Dorsolateral prefrontal cortex (tissue), 120 donors: ENCODE measurements at regions of chr5 and their contacts with region 1.

Region 1: DNA sequence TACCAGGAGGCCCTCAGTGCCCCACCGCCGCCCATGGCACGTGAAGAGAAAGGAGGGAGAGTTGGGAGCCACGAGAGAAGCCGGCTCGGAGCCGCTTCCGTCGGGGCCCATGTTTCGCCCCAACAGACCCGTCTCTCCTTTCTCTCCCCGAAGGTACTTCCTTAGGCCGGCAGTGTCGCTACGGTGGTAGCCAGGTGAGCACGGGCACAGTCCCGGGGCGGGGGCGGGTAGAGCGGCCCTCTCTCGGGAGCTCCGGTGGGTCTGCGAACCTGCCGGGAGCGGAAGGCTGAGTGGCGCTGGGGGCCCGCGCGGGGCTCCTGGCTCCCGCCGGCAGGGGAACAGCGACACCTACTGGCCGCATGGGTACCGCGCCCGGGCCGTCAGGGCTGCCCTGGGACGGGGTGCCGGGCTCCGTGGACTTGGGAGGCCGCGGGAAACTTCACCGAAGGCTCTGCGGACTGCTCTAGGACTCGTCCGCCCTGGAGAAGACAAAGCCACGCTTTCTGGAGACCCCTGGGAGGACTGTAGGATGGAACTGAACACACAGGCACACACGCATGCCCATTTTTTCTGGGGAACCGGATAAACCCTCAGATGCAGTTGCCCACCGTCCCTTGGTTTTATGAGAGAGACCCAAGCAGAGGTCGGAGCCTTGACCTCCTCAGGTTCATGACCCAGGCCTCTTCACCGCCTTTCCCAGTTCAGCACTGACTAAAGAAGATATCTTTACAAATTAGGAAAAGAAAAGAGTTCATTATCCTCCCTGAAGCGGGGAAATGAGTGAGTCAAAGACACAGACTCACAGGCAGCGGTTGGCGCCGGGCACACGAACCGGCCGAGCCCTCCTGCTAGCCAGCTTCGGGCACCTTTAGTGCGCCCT is 202.5 kb downstream of the MEF2C start:
- DNase-seq: peak; percentile 68 to 92 (median 84)
- H3K4me3 ChIP-seq: peak overlapping the region; percentile 53 to 93 (median 80)
- H3K27ac ChIP-seq: peak overlapping the region; percentile 91 to 100 (median 99)
- H3K27me3 ChIP-seq: peaks cover 0 to 27% (median 0%) of the 10 kb centered on the region in 45 donors
- CTCF ChIP-seq: peak in 55 of 56 donors; percentile 77 to 100 (median 96)

Region 2: GRCh38 chr5:87412630-87413342 is 1267.7 kb before region 1 on chr5 and contains the start of gene CCNH:
- intact Hi-C with region 1: loop called in 1 of 2 experiments (anchors 10 kb)
- DNase-seq: peak; percentile 95 to 100 (median 99)
- H3K4me3 ChIP-seq: peak within 1 kb of the TSS; percentile 62 to 99 (median 89)
- H3K27ac ChIP-seq: peak within 1 kb of the TSS; percentile 73 to 100 (median 97)
- H3K27me3 ChIP-seq: no peaks in the 10 kb centered on the region
- CTCF ChIP-seq: peak in 22 of 56 donors; percentile 6 to 54 (median 28)
- total RNA-seq, gene CCNH: 69.5 to 140 (median 104) TPM

Region 3: DNA sequence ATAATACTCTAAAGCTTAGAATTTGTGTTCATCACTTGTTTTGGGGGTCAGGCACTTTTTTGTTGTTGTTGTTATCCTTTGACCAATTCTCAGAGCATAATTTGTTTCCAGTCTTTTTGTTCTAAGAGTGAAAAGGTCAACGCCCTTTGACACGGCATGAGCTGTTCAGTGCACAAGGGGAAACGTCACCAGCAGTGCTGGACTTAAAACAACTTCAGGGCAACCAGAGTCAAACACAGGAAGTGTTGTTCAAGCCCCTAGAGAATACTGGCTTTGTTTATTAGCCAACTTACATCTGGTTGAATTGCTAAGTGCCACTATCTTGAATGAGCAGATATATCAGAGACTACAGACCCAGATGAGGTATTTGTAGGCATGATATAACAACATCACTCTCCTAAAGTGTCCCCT is 780.8 kb before region 1 on chr5:
- intact Hi-C with region 1: loop called in 1 of 2 experiments (anchors 5 kb)
- DNase-seq: peak in 8 of 10 donors; percentile 41 to 87 (median 66)
- H3K4me3 ChIP-seq: peak overlapping the region in 16 of 59 donors; percentile 2 to 38 (median 18)
- H3K27ac ChIP-seq: peak overlapping the region; percentile 59 to 94 (median 89)
- H3K27me3 ChIP-seq: no peaks in the 10 kb centered on the region
- CTCF ChIP-seq: peak in 4 of 56 donors; percentile 6 to 24 (median 12)

Region 4: GRCh38 chr5:88190139-88190834 is 490.2 kb before region 1 on chr5:
- intact Hi-C with region 1: loop called in 1 of 2 experiments (anchors 5 kb)
- DNase-seq: peak in 5 of 10 donors; percentile 14 to 43 (median 32)
- H3K4me3 ChIP-seq: peak overlapping the region in 55 of 59 donors; percentile 5 to 58 (median 38)
- H3K27ac ChIP-seq: peak overlapping the region in 26 of 59 donors; percentile 5 to 77 (median 37)
- H3K27me3 ChIP-seq: no peaks in the 10 kb centered on the region
- CTCF ChIP-seq: peak in 55 of 56 donors; percentile 43 to 85 (median 66)

Region 5: GRCh38 chr5:88388476-88389337 is 291.8 kb before region 1 on chr5:
- intact Hi-C with region 1: loop called in 1 of 2 experiments (anchors 5 kb)
- DNase-seq: no peak
- H3K4me3 ChIP-seq: peak overlapping the region in 55 of 59 donors; percentile 7 to 66 (median 38)
- H3K27ac ChIP-seq: peak overlapping the region; percentile 68 to 99 (median 96)
- H3K27me3 ChIP-seq: no peaks in the 10 kb centered on the region
- CTCF ChIP-seq: no peak